ENCODE measurements at regions of chr17 and their contacts with region 1.

Region 1: GRCh38 chr17:50783193-50783660 is 15.9 kb upstream of the ANKRD40CL start:
- DNase-seq: peak; percentile 74
- ATAC-seq: peak; percentile 99
- H3K4me3 ChIP-seq: no peak overlapping the region
- H3K27ac ChIP-seq: no peak overlapping the region
- H3K4me1 ChIP-seq: no peaks in the 10 kb centered on the region
- H3K27me3 ChIP-seq: no peaks in the 10 kb centered on the region
- CTCF ChIP-seq: peak; percentile 99

Region 2: GRCh38 chr17:50425682-50426471 is 357.4 kb before region 1 on chr17 and contains the start of gene ACSF2:
- CTCF ChIA-PET with region 1: interaction called, 16 read pairs
- POLR2A ChIA-PET with region 1: no interaction called
- in situ Hi-C with region 1: no loop called
- intact Hi-C with region 1: no loop called
- DNase-seq: no peak
- ATAC-seq: peak; percentile 92
- H3K4me3 ChIP-seq: peak within 1 kb of the TSS; percentile 58 to 66
- H3K27ac ChIP-seq: peak within 1 kb of the TSS; percentile 78
- H3K4me1 ChIP-seq: peaks cover 20% of the 10 kb centered on the region
- H3K27me3 ChIP-seq: no peaks in the 10 kb centered on the region
- CTCF ChIP-seq: no peak
- total RNA-seq, gene ACSF2: 17.2 TPM

Region 3: DNA sequence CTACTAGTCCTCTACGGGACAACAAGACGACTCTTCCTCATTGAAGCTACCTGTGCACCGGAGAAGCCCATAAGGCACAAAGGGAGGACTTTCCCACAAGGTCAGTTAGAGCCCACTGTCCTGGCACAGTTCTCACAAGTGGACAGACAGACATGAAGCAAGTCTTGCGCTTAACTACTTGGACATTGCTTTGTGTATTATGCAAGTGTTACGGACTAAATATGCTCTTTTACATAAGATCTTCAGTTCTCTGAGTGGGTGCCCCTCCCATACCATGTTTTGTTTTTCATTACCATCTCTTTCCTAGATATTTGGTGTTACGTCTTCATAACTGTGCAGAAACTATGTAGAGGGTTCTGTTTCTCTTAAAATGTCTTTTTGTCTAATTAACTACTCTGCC is 34.0 kb before region 1 on chr17:
- CTCF ChIA-PET with region 1: no interaction called
- POLR2A ChIA-PET with region 1: no interaction called
- in situ Hi-C with region 1: no loop called
- intact Hi-C with region 1: no loop called
- DNase-seq: no peak
- ATAC-seq: no peak
- H3K4me3 ChIP-seq: no peak overlapping the region
- H3K27ac ChIP-seq: no peak overlapping the region
- H3K4me1 ChIP-seq: no peaks in the 10 kb centered on the region
- H3K27me3 ChIP-seq: no peaks in the 10 kb centered on the region
- CTCF ChIP-seq: no peak

Region 4: DNA sequence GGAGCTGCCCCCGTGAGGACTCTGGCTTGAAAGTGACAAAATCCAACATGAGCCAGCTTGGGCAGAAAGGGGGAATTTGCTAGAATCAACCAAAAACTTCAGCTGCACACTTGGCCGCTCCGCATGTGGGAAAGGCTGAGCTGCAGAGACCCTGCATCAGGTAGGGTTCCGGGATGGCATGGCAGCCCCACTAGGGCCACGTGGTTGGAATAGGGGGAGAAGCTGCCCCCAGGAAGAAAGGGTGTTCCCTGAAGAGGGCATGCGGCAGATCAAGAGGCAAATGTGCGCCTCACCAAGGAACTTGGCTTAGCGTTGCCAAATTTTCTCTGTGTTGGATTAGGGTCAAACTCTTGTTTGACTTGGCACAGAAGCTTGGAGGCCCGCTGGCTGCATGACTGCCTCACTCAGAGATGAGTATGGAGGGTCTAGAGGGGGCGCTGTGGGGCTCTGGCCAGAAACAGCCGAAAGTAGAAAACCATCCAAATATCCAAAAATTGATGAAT is 23.0 kb after region 1 on chr17:
- CTCF ChIA-PET with region 1: interaction called, 11 read pairs
- POLR2A ChIA-PET with region 1: no interaction called
- in situ Hi-C with region 1: no loop called
- intact Hi-C with region 1: no loop called
- DNase-seq: no peak
- ATAC-seq: no peak
- H3K4me3 ChIP-seq: no peak overlapping the region
- H3K27ac ChIP-seq: no peak overlapping the region
- H3K4me1 ChIP-seq: peaks cover 4% of the 10 kb centered on the region; the same call in 1 of the 2 replicates
- H3K27me3 ChIP-seq: no peaks in the 10 kb centered on the region
- CTCF ChIP-seq: no peak

Region 5: GRCh38 chr17:50816771-50817751 is 33.8 kb after region 1 on chr17:
- CTCF ChIA-PET with region 1: no interaction called
- POLR2A ChIA-PET with region 1: interaction called, 14 read pairs
- in situ Hi-C with region 1: no loop called
- intact Hi-C with region 1: no loop called
- DNase-seq: peak; percentile 7
- ATAC-seq: peak; percentile 73
- H3K4me3 ChIP-seq: peak overlapping the region; percentile 17 to 28
- H3K27ac ChIP-seq: no peak overlapping the region
- H3K4me1 ChIP-seq: no peaks in the 10 kb centered on the region
- H3K27me3 ChIP-seq: peaks cover 2% of the 10 kb centered on the region
- CTCF ChIP-seq: peak; percentile 97

Region 6: DNA sequence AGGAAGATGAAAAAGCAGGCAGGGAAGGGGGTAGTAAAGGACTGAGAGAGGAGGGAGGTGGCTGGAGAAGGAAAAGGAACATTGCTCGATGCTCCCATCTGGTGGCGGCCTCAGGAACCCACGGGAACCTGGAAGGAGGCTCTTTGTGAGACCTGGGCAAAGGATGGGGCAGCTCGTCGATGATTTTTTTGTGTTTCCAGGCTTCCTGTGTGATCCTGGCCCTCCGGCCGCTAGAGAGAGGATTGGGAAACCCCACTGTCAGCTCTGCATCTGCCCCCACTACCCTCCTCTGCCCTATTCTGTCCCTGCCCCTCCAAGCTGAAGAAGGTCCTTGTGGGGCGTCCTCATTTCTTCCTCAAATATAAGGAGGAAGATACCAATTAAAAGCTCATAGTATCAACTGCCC is 58.7 kb after region 1 on chr17:
- CTCF ChIA-PET with region 1: interaction called, 51 read pairs
- POLR2A ChIA-PET with region 1: interaction called, 8 read pairs
- in situ Hi-C with region 1: no loop called
- intact Hi-C with region 1: loop called (anchors 1 kb)
- DNase-seq: no peak
- ATAC-seq: peak; percentile 92
- H3K4me3 ChIP-seq: no peak overlapping the region
- H3K27ac ChIP-seq: no peak overlapping the region
- H3K4me1 ChIP-seq: no peaks in the 10 kb centered on the region
- H3K27me3 ChIP-seq: no peaks in the 10 kb centered on the region
- CTCF ChIP-seq: peak; percentile 89

Region 7: DNA sequence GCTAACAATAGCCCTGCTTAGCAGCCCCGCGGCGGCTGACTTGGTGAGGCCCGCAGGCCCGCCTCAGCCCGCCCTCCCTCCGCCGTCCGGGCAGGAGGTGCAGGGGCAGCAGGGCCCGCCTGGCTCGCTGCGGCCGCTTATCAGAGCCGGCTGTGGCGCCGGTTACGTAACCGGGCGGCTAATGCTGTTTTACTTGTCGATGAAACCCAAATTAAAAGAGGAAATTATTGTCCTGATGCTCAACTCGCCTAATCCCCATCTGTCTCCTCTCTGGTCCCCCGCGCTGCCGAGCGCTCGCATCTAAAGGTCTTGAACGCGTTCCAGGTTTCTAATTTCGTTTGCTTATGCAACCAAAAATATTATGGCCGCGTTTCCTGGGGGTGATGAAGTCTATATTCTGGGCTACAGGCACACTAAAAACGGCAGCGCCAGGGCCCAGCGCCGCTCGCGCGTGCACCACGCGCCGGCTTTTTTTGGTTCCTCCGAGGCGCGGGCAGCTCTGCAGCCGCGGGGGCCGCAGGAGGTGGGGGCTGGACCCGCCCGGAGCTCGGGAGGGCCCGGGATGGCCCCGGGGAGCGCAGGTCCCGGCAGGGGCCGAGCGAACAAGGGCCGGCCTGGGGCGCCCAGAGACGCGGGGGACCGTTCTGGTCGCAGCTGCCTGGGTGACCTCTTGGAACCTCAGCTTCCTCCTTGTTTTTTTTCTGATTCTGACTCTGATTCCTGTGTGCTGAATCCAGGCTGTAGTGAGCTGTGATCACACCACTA is 148.1 kb after region 1 on chr17:
- CTCF ChIA-PET with region 1: interaction called, 13 read pairs
- POLR2A ChIA-PET with region 1: interaction called, 4 read pairs
- in situ Hi-C with region 1: no loop called
- intact Hi-C with region 1: no loop called
- DNase-seq: no peak
- ATAC-seq: peak; percentile 61
- H3K4me3 ChIP-seq: peak overlapping the region; percentile 30 to 55
- H3K27ac ChIP-seq: peak overlapping the region; percentile 41; the same call in 1 of the 2 replicates
- H3K4me1 ChIP-seq: 0 out of 2 replicates have a peak, but pooled peaks cover 5% of the 10 kb centered on the region
- H3K27me3 ChIP-seq: no peaks in the 10 kb centered on the region
- CTCF ChIP-seq: no peak

Region 8: DNA sequence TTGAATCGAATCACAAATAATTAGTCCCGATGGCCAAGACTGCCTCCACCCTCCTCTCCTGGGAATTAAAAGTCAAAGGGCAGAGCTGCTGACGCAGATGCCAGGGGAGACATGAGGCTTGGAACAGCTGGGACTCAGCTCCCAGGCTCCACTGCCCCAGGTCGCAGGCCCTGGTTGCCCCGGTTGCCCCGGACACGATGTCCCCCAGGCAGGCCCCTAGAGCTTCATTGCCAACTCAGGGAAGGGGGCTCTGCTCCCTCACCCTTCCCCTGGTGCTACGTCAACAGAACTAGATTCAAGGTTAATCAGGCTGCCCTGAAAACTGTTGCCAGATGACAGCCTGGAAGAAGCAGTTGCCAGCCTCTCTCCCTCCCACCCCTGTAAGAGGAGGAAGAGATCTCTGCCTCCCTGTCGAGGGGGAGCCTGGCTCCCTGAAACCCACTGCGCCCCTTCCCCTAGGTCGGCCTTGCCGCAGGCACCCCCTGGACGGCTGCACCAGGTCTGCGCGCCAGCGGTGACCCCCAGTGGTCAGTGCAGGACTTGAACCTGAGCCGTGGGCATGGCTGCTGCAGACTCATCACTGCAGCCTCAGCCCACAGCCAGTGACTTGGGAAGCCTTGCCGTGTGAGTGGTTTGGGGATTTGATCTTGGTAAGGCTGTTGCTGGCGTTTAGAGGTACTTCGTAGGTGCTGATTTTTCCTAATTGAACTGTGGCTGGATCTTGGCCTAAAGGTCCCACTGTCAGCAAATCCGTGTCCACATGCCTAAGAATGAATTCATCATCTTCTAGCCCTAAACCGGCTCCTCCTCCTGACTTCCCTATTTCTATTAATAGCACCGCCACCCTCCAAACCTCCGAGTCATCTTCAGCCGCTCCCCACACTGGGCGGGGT is 167.0 kb after region 1 on chr17:
- CTCF ChIA-PET with region 1: interaction called, 14 read pairs
- POLR2A ChIA-PET with region 1: no interaction called
- in situ Hi-C with region 1: no loop called
- intact Hi-C with region 1: loop called (anchors 5 kb)
- DNase-seq: peak; percentile 67
- ATAC-seq: peak; percentile 86
- H3K4me3 ChIP-seq: peak overlapping the region in 1 of 2 experiments; percentile 15; a peak in 1 of 4 replicates
- H3K27ac ChIP-seq: peak overlapping the region; percentile 87
- H3K4me1 ChIP-seq: peaks cover 63% of the 10 kb centered on the region
- H3K27me3 ChIP-seq: no peaks in the 10 kb centered on the region
- CTCF ChIP-seq: peak; percentile 96

Measured in Panc1 (cell line).